ENCODE measurements at regions of chr14 and their contacts with region 1.

Region 1: DNA sequence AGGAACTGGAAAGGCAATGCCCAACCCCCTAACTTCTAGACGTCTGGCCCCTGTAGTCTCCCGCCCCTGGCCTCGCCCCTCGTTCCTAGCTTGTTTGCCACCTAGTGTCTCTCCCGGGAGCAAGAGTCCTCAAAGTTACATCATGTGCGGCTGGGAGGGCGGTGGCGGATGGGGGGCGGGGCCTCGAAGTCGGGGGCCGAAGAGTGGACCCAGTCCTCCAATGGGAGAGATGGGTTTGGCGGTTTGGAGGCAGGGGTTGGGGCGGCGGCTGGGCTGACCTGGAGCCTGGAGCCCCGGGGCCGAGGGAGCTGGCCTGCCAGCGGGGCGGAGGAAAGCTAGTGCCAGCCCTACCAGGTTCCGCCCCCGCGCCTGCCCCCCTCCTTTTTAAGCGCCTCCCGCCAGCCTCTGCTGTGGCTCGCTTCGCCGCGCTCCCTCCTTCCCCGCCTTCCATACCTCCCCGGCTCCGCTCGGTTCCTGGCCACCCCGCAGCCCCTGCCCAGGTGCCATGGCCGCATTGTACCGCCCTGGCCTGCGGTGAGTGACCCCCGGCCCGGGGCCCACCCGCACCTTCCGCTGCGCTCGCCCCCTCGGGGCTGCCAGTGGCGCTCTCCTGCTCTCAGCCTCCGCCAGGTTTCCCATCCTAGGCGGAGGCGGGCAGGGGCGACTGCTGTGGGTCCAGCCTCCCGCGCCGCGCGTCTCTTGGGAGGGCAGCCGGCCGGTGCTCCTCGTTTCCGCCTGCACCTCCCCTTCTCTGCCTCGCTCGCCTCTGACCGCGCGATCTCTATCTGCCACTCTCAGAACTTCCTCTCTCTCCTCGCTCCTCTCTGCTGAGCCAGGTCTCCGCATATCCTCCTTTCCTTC is at the start of gene PCK2:
- H3K4me3 ChIP-seq: peak within 1 kb of the TSS; percentile 81
- H3K27ac ChIP-seq: peak within 1 kb of the TSS; percentile 87
- H3K4me1 ChIP-seq: peaks cover 3% of the 10 kb centered on the region; the same call in 1 of the 2 replicates
- CTCF ChIP-seq: peak; percentile 77

Region 2: DNA sequence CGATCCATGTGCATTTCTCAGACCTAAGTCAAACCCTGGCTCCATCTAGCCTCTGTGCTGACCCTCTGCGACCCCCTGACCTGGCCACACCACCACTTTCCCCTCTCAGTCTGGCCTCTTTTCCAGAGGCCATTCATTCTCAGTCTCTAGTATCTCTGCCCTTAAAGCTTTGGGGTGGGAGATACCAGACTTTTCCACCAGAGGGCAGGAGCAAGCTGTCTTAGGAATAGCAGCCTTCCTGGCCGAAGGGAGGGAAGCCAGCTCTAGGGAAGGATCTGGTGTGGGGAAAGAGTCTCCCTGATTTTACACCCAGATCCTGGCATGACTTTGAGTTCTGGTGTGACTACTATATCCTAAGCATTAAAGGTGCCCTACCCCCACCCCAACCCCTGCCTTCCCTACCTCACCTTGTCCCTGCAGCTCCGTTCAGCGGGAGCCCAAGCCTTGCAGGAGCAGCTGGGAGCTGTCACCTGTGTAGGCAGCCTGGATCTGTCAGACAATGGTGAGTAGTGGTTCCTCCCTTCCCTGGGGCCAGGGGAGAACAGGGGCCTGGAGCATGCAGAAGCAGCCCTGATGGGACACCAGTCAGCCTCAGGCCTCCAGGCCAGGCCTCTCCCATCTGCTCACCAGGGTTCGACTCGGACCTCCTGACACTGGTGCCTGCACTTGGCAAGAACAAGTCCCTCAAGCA is 35.7 kb before region 1 on chr14:
- CTCF ChIA-PET with region 1: interaction called, 247 read pairs
- POLR2A ChIA-PET with region 1: interaction called, 22 read pairs
- H3K4me3 ChIP-seq: no peak overlapping the region
- H3K27ac ChIP-seq: no peak overlapping the region
- H3K4me1 ChIP-seq: no peaks in the 10 kb centered on the region
- CTCF ChIP-seq: peak; percentile 85

Region 3: DNA sequence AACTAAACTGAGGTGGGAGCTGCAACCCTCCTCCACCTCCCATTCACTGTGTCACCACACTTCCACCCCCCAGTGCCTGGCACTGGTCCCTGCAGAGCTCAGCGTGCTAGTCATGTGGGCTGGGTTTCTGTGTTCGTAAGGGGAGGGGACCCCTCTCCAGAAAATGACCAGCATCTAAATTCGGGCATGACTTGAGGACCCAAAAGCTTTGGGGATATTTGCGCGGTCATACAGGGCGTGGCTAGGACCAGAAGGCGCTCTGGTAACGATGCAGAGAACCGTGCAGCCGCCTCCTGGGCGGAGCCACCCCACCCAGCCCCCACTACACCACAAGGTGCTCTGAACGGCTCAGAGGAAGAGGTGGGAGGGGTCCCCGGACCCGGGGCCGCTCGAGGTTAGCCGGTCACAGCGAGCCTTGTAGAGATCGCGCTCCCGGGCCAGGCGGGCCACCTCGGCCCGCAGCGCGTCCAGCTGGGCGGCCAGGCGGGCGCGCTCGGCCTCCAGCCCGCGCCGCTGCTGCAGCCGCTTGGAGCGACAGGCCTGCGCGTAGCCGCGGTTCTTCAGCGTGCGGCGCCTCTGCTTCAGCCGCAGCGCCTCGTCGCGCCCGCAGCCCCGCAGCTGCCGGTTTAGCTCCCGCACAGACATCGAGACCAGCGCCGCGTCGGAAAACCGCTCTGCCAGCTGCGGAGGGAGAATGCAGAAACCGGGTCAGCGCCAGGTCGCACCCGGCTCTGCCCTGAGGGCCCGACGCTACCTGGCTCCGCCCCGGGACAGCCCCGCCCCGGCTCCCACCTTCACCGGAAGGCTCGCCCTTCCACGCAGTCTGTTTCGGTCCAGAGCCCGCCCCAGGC is 13.0 kb before region 1 on chr14:
- CTCF ChIA-PET with region 1: interaction called, 77 read pairs
- POLR2A ChIA-PET with region 1: interaction called, 27 read pairs
- H3K4me3 ChIP-seq: peak overlapping the region; percentile 58
- H3K27ac ChIP-seq: peak overlapping the region; percentile 47; the same call in 1 of the 2 replicates
- H3K4me1 ChIP-seq: peaks cover 10% of the 10 kb centered on the region
- CTCF ChIP-seq: no peak

Region 4: DNA sequence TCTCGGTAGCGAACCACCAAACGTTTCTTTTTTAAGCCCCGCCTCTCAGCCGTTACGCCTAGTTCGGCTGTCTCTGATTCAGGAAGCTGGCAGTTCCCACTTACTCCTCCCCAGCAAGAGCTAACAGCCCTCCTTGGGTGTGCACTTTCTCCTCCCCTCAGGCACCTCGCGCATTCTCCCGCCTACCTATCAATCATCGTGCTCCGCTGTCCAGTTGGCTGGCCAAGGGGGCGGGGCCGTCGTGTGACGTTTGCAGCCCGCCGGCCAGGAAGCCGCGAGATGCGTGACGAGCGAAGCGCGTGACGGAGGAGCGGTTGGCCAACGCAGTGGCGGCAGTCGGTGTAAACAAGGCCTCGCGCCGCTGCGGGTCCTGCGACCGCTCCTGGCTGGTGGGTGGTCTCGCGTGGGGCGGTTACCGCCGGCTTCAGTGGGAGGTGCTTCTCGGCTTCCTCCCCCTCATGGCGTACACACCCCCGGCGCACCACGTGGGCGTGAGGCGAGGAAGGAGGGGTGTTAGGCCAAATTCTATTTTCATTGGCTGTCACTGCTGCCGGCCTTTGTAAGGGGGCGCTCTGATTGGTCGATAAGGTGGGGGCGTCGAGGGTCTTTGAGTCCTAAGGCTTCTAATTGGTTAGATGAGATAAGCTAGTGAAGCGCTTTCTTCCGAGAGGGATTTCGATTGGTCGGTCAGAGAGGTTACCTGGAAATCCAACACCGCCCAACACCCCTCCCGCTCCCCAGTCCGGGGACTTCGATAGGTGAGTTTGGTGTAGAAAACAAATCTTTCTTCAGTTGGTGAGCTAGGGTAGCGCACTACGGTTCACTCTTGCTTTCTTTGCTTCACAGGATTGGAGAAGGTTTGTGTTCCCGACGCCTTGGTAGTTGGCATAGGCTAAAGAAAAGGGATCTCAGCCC is 20.7 kb after region 1 on chr14 and contains the starts of genes DCAF11 and NRL:
- CTCF ChIA-PET with region 1: interaction called, 145 read pairs
- POLR2A ChIA-PET with region 1: interaction called, 64 read pairs
- H3K4me3 ChIP-seq: peak within 1 kb of the TSS; percentile 98
- H3K27ac ChIP-seq: peak within 1 kb of the TSS; percentile 94
- H3K4me1 ChIP-seq: no peaks in the 10 kb centered on the region
- CTCF ChIP-seq: no peak

Region 5: DNA sequence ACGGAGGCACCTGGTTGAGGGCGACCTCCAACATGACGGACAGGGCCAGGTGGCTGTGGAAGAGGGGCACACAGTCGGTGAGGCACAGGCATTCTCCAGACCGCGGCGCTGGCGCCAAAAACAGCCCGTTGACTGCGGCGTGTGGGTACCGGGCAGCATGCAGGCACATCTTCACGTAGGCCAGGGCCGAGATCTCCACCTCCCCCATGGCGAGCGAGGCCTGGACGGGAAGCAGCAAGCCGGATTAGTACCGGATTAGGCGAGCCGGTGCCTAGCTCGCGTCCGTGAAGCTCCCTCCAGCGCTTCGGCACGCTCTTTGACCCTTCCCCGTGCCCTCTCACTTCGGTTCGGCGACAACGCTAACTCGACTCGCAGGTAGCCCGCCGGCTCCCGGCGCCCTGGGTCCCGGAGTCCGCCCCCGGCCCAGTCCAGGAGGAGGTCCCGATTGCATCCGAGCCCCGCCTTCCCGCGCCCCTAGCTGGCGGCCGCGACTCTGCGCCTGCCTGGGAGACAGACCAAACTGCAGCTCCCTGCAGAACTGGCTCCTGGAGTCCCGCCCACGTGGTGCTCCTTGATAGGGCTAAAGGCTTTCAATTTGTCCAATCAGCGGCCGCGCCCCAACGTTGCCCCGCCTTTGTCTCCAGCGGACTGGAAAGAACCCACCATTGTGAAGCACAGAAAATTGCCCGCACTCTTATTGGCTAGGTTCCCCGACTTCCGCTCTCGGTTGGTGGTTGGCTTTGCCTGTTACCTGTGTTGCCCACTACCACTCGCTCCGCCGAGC is 47.2 kb after region 1 on chr14 and contains the start of gene EMC9:
- CTCF ChIA-PET with region 1: interaction called, 5 read pairs
- POLR2A ChIA-PET with region 1: interaction called, 22 read pairs
- H3K4me3 ChIP-seq: peak within 1 kb of the TSS; percentile 90
- H3K27ac ChIP-seq: peak within 1 kb of the TSS; percentile 89
- H3K4me1 ChIP-seq: peaks cover 8% of the 10 kb centered on the region
- CTCF ChIP-seq: peak; percentile 78

Region 6: DNA sequence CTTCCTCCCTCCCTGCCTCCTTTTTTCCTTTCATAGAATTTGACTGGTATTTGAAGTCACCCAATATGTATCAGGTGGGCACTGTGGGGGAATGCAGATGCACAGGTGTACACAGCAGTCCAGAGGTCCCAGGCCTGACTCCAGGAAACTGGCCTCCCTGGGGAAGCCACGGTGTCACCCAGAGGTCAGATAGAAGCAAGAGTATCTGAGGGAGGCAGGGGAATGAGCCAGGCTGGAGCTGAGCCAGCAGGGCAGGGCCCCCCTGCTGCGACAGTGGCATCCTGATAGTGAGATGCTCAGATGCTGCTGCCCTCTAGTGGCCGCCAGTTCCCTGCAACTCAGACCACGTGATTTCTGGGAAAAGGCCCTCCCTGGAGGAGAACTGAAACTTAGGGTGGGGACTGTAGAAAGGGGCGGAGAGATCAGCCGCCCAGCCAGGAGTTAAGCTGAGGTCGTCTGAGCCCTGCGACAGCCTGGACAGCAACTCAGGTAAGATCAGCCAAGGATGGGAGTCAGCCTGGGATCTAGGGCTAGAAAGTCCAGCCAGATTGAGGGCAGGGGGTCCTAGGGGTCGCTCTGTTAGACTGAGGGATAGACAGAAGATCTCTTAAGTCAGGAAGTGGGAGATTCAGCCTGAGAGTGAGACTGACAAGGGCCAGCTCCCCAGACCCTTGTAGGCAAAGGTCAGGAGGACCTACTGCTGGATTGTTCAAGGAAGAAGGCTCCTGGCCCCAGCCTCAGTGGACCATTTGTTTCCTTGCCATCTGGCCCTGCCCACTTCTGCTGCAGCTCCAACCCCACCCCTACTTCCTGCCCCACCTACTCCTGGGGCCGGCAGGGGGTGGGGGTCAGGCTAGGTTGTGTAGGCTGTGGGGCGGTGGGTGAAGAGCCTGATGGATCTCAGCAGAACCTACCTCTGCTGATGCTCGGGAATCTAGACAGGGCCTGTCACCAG is 67.0 kb after region 1 on chr14 and contains the start of gene IRF9:
- CTCF ChIA-PET with region 1: interaction called, 5 read pairs
- POLR2A ChIA-PET with region 1: interaction called, 13 read pairs
- H3K4me3 ChIP-seq: peak within 1 kb of the TSS; percentile 46
- H3K27ac ChIP-seq: 0 out of 2 replicates have a peak within 1 kb of the TSS, but pooled peaks have one; percentile 13
- H3K4me1 ChIP-seq: peaks cover 5% of the 10 kb centered on the region
- CTCF ChIP-seq: peak; percentile 95

Measured in HEK293 (cell line).